Thyroid gland (tissue), 4 donors: ENCODE measurements at regions of chr16 and their contacts with region 1.

Region 1: GRCh38 chr16:8655184-8655717 is 19.2 kb upstream of the ABAT start:
- DNase-seq: no peak
- H3K4me3 ChIP-seq: no peak overlapping the region
- H3K27ac ChIP-seq: no peak overlapping the region
- H3K4me1 ChIP-seq: no peaks in the 10 kb centered on the region
- H3K27me3 ChIP-seq: no peaks in the 10 kb centered on the region
- CTCF ChIP-seq: peak in 2 of 6 experiments; percentile 12 to 28
- POLR2A ChIP-seq: no peak

Region 2: DNA sequence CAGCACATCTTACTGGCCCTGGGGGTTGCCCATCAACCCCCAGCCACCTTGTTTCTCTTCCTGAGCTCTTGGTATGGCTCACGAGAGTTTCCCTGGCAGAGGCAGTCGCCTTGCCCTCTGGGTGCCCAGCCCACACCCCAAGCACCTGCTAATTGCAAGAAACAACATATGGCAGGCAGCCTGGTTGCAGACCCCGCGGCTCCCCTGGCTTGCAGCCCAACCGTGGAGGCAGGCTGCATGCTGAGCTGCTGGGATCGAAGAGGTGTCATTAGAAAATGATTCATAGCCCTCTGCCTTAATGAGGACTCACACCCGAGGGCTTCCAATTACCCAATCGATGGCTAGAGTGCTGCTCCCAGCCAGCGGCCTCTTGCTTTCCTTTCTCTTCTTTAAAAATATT is 180.7 kb before region 1 on chr16:
- intact Hi-C with region 1: no loop called
- DNase-seq: no peak
- H3K4me3 ChIP-seq: no peak overlapping the region
- H3K27ac ChIP-seq: no peak overlapping the region
- H3K4me1 ChIP-seq: no peaks in the 10 kb centered on the region
- H3K27me3 ChIP-seq: no peaks in the 10 kb centered on the region
- CTCF ChIP-seq: no peak
- POLR2A ChIP-seq: no peak

Region 3: GRCh38 chr16:8878521-8878911 is 223.3 kb after region 1 on chr16:
- intact Hi-C with region 1: loop called (anchors 5 kb)
- DNase-seq: no peak
- H3K4me3 ChIP-seq: no peak overlapping the region
- H3K27ac ChIP-seq: no peak overlapping the region
- H3K4me1 ChIP-seq: peaks cover 0 to 4% of the 10 kb centered on the region in 2 donors
- H3K27me3 ChIP-seq: no peaks in the 10 kb centered on the region
- CTCF ChIP-seq: no peak
- POLR2A ChIP-seq: no peak

Region 4: DNA sequence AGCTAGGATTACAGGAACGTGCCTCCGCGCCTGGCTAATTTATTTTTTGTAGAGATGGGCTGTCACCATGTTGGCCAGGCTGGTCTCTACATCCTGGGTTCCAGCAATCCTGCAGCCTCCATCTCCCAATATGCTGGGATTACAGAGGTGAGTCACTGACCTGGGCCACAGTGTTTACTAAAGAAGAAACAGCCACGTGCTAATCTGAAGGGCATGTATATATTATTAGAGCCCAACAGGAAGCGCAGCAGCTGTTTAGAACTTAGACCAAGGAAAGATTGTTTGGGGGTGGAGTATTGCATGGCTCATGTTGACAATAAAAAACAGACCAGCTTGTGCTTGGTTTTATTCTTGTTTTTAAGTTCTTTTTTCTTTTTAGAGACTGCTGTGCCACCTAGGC is 496.3 kb after region 1 on chr16:
- intact Hi-C with region 1: no loop called
- DNase-seq: no peak
- H3K4me3 ChIP-seq: no peak overlapping the region
- H3K27ac ChIP-seq: no peak overlapping the region
- H3K4me1 ChIP-seq: peaks cover 0 to 6% of the 10 kb centered on the region in 2 donors
- H3K27me3 ChIP-seq: no peaks in the 10 kb centered on the region
- CTCF ChIP-seq: no peak
- POLR2A ChIP-seq: no peak